HEK293 (cell line): ENCODE measurements at regions of chr2 and their contacts with region 1.

Region 1: GRCh38 chr2:120174963-120175581 is 48.1 kb downstream of the TMEM185B start:
- H3K4me3 ChIP-seq: no peak overlapping the region
- H3K27ac ChIP-seq: no peak overlapping the region
- H3K4me1 ChIP-seq: no peaks in the 10 kb centered on the region
- CTCF ChIP-seq: 0 out of 2 replicates have a peak, but pooled peaks have one; percentile 21

Region 2: DNA sequence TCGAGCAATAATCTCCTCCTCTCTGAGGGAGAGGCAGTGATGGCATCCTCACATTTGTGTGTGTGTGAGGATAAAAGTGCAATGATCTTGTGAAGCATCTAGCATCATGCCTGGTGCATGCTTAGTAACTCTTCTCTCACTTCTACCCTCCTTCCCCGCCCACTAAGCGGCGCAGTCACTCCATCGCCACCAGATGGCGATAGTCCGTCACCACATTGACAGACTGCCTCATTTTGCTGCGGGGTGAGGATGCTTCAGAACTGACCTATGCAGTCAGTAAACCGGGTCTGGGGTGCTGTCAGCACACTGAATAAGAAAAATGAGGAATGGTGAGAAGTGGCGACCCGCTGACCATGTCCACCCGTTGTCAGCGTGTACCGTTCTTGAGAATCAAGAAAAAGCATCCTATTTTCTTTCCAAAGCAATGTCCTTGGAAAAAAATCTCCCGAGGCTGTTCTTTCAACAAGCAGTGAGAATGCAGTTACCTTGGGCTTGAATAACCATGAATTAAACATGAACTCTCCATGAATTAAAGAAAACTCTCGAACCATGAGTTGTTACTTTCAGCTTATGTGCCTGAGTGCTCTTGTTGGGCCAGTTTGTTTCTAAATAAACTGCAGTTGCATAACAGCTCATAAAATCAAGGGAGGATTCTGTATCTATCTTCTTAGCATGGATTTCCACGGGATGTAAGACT is 533.4 kb before region 1 on chr2:
- CTCF ChIA-PET with region 1: interaction called, 12 read pairs
- POLR2A ChIA-PET with region 1: no interaction called
- H3K4me3 ChIP-seq: no peak overlapping the region
- H3K27ac ChIP-seq: no peak overlapping the region
- H3K4me1 ChIP-seq: no peaks in the 10 kb centered on the region
- CTCF ChIP-seq: peak; percentile 91

Region 3: GRCh38 chr2:119668546-119668945 is 506.5 kb before region 1 on chr2:
- CTCF ChIA-PET with region 1: no interaction called
- POLR2A ChIA-PET with region 1: no interaction called
- H3K4me3 ChIP-seq: no peak overlapping the region
- H3K27ac ChIP-seq: no peak overlapping the region
- H3K4me1 ChIP-seq: no peaks in the 10 kb centered on the region
- CTCF ChIP-seq: no peak

Region 4: GRCh38 chr2:119702918-119703401 is 472.1 kb before region 1 on chr2:
- CTCF ChIA-PET with region 1: interaction called, 20 read pairs
- POLR2A ChIA-PET with region 1: no interaction called
- H3K4me3 ChIP-seq: no peak overlapping the region
- H3K27ac ChIP-seq: no peak overlapping the region
- H3K4me1 ChIP-seq: no peaks in the 10 kb centered on the region
- CTCF ChIP-seq: peak; percentile 84; the same call in 1 of the 2 replicates

Region 5: GRCh38 chr2:119753041-119753929 is 421.8 kb before region 1 on chr2:
- CTCF ChIA-PET with region 1: interaction called, 19 read pairs
- POLR2A ChIA-PET with region 1: no interaction called
- H3K4me3 ChIP-seq: no peak overlapping the region
- H3K27ac ChIP-seq: no peak overlapping the region
- H3K4me1 ChIP-seq: no peaks in the 10 kb centered on the region
- CTCF ChIP-seq: peak; percentile 55; the same call in 1 of the 2 replicates

Region 6: DNA sequence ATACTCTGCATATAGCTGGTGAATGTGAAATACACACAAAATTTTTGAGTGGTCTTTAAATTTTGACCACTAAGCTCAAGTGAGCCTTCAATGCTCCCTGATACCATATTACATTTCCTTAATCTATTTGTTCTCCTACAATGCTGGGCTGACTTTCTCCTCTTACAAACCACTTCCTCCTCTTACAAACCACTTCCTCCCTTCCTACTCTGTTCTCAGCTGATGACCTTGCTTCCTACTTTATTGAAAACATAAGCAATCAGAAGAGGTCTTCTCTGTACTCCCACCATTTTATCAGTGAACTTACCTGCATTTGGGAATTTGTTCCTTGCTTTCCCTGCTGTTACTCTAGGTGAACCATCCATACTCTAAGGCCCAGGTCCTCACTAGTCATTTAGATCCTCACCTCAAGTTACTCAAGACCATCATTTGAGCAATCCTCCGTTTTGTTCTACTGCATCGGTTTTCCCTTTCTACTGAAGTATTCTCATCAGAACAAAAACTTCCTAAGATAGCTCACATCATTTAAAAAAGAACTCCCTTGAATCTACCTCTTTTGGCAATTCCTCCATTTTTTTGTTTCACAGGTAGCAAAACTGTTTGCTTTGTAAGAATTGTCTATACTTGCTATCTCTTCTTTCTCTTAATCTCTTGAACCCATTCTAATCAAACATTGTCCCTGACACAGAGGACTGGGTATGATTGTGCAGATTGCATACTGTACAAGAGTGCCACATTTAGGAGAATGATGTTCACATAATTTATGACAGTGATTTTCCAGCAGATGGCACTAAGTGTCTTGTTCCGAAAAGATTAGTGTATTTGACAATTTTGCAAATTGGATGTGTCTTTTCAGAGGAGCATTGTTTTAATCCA is 65.6 kb before region 1 on chr2:
- CTCF ChIA-PET with region 1: interaction called, 29 read pairs
- POLR2A ChIA-PET with region 1: no interaction called
- H3K4me3 ChIP-seq: no peak overlapping the region
- H3K27ac ChIP-seq: no peak overlapping the region
- H3K4me1 ChIP-seq: peaks cover 16% of the 10 kb centered on the region
- CTCF ChIP-seq: peak; percentile 38; the same call in 1 of the 2 replicates

Region 7: DNA sequence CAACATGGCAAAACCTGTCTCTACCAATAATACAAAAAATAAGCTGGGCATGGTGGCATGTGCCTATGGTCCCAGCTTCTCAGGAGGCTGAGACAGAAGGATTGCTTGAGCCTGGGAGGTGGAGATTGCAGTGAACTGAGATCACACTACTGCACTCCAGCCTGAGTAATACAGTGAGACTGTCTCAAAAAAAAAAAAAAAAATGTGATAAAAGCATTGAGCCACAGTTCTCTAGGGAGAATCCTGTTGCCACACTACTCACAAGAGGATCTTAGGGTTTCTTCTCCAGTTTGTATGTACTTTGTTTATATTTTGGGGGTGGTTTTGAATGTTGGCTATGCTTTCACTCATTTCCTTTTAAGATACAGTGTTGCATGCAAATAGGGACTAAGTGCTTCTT is 13.9 kb before region 1 on chr2:
- CTCF ChIA-PET with region 1: interaction called, 14 read pairs
- POLR2A ChIA-PET with region 1: no interaction called
- H3K4me3 ChIP-seq: no peak overlapping the region
- H3K27ac ChIP-seq: no peak overlapping the region
- H3K4me1 ChIP-seq: no peaks in the 10 kb centered on the region
- CTCF ChIP-seq: no peak

Region 8: GRCh38 chr2:120680136-120680761 is 505.2 kb after region 1 on chr2:
- CTCF ChIA-PET with region 1: interaction called, 10 read pairs
- POLR2A ChIA-PET with region 1: no interaction called
- H3K4me3 ChIP-seq: no peak overlapping the region
- H3K27ac ChIP-seq: no peak overlapping the region
- H3K4me1 ChIP-seq: no peaks in the 10 kb centered on the region
- CTCF ChIP-seq: peak; percentile 87